ENCODE measurements at regions of chr17 and their contacts with region 1.

Region 1: GRCh38 chr17:42120770-42121769 is at the start of gene KAT2A:
- DNase-seq: peak; percentile 88

Region 2: GRCh38 chr17:41966463-41967140 is 154.5 kb before region 1 on chr17 and contains the start of gene CNP:
- in situ Hi-C with region 1: loop called (anchors 25 kb)
- DNase-seq: peak; percentile 93

Region 3: GRCh38 chr17:42016925-42017796 is 103.9 kb before region 1 on chr17 and contains the start of gene DNAJC7:
- in situ Hi-C with region 1: no loop called
- DNase-seq: peak; percentile 92

Measured in ACHN (cell line).